Dendritic cell treated with granulocyte-macrophage colony-stimulating factor and Interleukin-4, amounts not matched to agents 40 ng/mL and 50 ng/mL, for 4 days (primary cell): ENCODE measurements at regions of chr5 and their contacts with region 1.

Region 1: GRCh38 chr5:119743927-119744326 is 114.6 kb downstream of the FAM170A start:
- H3K4me3 Mint-ChIP-seq: no peak overlapping the region
- H3K27ac Mint-ChIP-seq: no peak overlapping the region
- H3K4me1 Mint-ChIP-seq: peaks cover 7% of the 10 kb centered on the region
- H3K27me3 Mint-ChIP-seq: peaks cover 2% of the 10 kb centered on the region

Region 2: DNA sequence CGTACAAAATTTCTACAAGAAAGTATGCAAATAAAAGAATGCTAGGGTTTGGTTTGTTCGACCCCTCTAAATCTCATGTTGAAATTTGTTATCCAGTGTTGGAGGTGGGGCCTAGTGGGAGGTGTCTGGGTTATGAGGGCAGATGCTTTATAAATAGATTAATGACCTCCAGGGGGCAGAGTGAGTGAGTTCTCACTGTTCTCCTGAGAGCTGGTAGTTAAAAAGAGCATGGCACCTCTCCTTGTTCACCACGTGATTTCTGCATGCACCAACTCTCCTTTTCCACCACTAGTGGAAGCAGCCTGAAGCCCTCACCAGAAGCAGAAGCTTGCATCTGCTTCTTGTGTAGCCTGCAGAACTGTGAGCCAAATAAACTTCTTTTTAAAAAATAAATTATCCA is 165.0 kb before region 1 on chr5:
- intact Hi-C with region 1: loop called (anchors 1 kb)
- H3K4me3 Mint-ChIP-seq: no peak overlapping the region
- H3K27ac Mint-ChIP-seq: no peak overlapping the region
- H3K4me1 Mint-ChIP-seq: no peaks in the 10 kb centered on the region
- H3K27me3 Mint-ChIP-seq: peaks cover 6% of the 10 kb centered on the region